Activated T-helper 1 cell treated with anti-CD3 and anti-CD28 coated beads, Interleukin-12 subunit alpha, Interleukin-12 subunit beta, Interleukin-2, Interleukin-4 antibody, amounts not matched to agents 30 ng/mL and 10 ng/mL and 1 ng/mL, durations not matched to agents 14 hours and 24 hours and 36 hours (primary cell): ENCODE measurements at regions of chr11 and their contacts with region 1.

Region 1: GRCh38 chr11:65314501-65315203 is at the start of gene CDC42EP2:
- DNase-seq: peak; percentile 72
- H3K4me3 Mint-ChIP-seq: peak within 1 kb of the TSS; percentile 73
- H3K27ac Mint-ChIP-seq: no peak within 1 kb of the TSS
- H3K4me1 Mint-ChIP-seq: peaks cover 7% of the 10 kb centered on the region
- H3K27me3 Mint-ChIP-seq: peaks cover 10% of the 10 kb centered on the region
- total RNA-seq, gene CDC42EP2: 1.6 and 2.7 TPM in 2 replicates

Region 2: DNA sequence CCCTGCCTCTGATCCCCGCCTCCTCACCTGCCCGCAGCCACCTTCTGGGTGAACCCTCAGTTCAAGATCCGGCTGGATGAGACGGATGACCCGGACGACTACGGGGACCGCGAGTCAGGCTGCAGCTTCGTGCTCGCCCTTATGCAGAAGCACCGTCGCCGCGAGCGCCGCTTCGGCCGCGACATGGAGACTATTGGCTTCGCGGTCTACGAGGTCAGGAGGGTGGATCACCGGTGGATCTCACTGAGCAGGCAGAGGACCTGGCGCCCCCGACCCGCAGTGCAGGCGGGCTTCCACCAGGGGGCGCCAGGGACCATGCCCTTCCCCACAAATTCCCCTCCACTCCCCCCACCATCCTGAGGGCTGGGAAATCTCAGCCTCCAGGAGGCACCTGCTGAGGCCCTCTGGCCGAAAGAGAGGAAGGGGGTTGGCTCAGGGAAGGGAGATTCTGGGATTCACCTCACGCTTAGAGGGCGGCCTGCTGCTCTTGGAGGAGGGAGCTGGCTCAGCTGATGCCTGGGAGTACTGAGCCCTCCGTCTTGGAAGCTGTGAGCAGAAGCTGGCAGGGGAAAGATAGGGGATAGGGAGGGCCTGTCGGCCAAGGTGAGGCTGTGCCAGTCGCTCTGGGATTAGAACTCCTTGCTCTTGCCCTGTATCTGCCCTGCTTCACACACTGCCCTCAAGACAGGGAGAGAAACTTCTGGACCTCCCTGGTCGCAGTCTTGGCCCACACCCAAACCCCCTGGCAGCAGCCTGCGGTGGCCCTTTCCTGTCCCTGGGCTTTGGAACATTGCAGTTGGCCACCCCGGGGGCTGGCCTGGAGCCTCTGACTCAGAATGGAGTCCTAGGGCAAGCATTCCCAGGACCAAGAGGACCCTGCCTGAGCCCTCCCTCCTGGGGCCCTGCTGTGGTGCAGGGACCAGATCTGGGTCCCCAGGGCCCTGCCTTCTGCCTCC is 109.7 kb before region 1 on chr11:
- intact Hi-C with region 1: loop called (anchors 1 kb)
- DNase-seq: no peak
- H3K4me3 Mint-ChIP-seq: no peak overlapping the region
- H3K27ac Mint-ChIP-seq: no peak overlapping the region
- H3K4me1 Mint-ChIP-seq: no peaks in the 10 kb centered on the region
- H3K27me3 Mint-ChIP-seq: no peaks in the 10 kb centered on the region

Region 3: DNA sequence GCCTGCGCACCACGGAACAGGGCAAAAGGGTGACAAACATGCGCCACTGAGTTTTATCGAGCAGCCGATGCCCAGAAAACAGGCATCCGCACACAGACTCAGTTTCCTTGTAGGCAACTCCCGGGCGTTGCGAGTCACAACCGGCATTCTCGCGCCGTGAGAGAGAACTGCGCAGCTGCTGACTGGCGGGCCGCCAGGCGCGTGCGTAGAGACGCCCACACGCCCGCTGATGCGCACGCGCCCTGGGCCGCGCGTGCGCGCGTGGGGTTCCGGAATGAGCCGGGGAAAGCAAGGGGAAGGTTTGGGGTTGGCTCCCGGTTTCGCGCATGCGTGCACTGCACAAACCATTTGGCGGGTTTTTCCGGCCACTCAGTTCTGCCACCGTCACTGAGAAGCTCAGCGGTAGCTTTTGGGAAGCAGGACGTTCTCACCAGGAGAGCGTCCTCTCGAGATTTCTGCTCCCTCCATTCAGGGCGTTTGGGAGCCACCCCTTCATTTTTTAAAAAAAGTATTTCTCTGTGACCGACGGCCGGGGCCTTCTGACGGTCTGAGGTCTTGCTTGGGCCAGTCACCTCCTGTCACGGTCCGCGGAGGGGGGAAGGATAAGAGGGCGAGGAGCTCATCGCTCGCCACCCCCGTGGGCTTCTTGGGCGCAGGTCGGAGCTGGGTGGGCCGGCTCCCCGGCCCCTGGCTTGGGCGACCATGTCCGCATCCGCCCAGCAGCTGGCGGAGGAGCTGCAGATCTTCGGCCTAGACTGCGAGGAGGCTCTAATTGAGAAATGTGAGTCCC is 52.9 kb before region 1 on chr11 and contains the start of gene POLA2:
- intact Hi-C with region 1: loop called (anchors 2 kb)
- DNase-seq: peak; percentile 97
- H3K4me3 Mint-ChIP-seq: peak within 1 kb of the TSS; percentile 94
- H3K27ac Mint-ChIP-seq: peak within 1 kb of the TSS; percentile 97
- H3K4me1 Mint-ChIP-seq: peaks cover 47% of the 10 kb centered on the region
- H3K27me3 Mint-ChIP-seq: no peaks in the 10 kb centered on the region
- total RNA-seq, gene POLA2: 78.2 and 78.9 TPM in 2 replicates

Region 4: DNA sequence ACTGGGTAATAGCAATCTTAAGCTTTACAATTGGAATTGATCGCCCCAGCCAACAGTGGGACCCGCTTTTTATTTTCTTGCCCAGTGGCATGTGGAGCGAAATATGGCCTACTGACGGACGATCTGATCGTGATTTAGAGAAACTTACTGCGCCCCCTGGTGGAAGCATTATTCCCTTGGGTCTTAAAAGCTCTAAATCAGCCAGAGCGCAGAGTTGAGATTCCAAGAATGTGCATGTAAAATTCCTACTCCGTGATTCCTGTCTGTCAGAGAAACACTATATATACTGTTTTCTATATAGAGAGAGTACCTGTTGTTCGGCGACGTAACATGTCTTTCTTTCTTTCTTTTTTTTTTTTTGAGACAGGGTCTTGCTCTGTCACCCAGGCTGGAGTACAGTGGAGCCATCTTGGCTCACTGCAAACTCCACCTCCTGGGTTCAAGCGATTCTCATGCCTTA is 15.3 kb after region 1 on chr11:
- intact Hi-C with region 1: loop called (anchors 1 kb)
- DNase-seq: peak; percentile 67
- H3K4me3 Mint-ChIP-seq: no peak overlapping the region
- H3K27ac Mint-ChIP-seq: no peak overlapping the region
- H3K4me1 Mint-ChIP-seq: peaks cover 16% of the 10 kb centered on the region
- H3K27me3 Mint-ChIP-seq: peaks cover 4% of the 10 kb centered on the region

Region 5: GRCh38 chr11:65506770-65507505 is 192.3 kb after region 1 on chr11:
- intact Hi-C with region 1: loop called (anchors 1 kb)
- DNase-seq: peak; percentile 31
- H3K4me3 Mint-ChIP-seq: no peak overlapping the region
- H3K27ac Mint-ChIP-seq: peak overlapping the region; percentile 72
- H3K4me1 Mint-ChIP-seq: peaks cover 56% of the 10 kb centered on the region
- H3K27me3 Mint-ChIP-seq: no peaks in the 10 kb centered on the region